Vagina (tissue), 2 donors: ENCODE measurements at regions of chr1 and their contacts with region 1.

Region 1: GRCh38 chr1:68585351-68585750 is 88.5 kb upstream of the DEPDC1 start:
- DNase-seq: no peak
- H3K4me3 ChIP-seq: no peak overlapping the region
- H3K27ac ChIP-seq: no peak overlapping the region
- H3K4me1 ChIP-seq: no peaks in the 10 kb centered on the region
- H3K27me3 ChIP-seq: no peaks in the 10 kb centered on the region
- CTCF ChIP-seq: no peak
- POLR2A ChIP-seq: no peak

Region 2: GRCh38 chr1:68442822-68443556 is 142.4 kb before region 1 on chr1:
- intact Hi-C with region 1: no loop called
- DNase-seq: no peak
- H3K4me3 ChIP-seq: no peak overlapping the region
- H3K27ac ChIP-seq: no peak overlapping the region
- H3K4me1 ChIP-seq: no peaks in the 10 kb centered on the region
- H3K27me3 ChIP-seq: no peaks in the 10 kb centered on the region
- CTCF ChIP-seq: peak in 1 of 3 experiments; percentile 38
- POLR2A ChIP-seq: no peak

Region 3: GRCh38 chr1:68470388-68470970 is 114.9 kb before region 1 on chr1:
- intact Hi-C with region 1: no loop called
- DNase-seq: no peak
- H3K4me3 ChIP-seq: no peak overlapping the region
- H3K27ac ChIP-seq: no peak overlapping the region
- H3K4me1 ChIP-seq: no peaks in the 10 kb centered on the region
- H3K27me3 ChIP-seq: no peaks in the 10 kb centered on the region
- CTCF ChIP-seq: no peak
- POLR2A ChIP-seq: no peak

Region 4: GRCh38 chr1:69967245-69967766 is 1382.0 kb after region 1 on chr1:
- intact Hi-C with region 1: loop called (anchors 5 kb)
- DNase-seq: no peak
- H3K4me3 ChIP-seq: no peak overlapping the region
- H3K27ac ChIP-seq: no peak overlapping the region
- H3K4me1 ChIP-seq: no peaks in the 10 kb centered on the region
- H3K27me3 ChIP-seq: no peaks in the 10 kb centered on the region
- CTCF ChIP-seq: no peak
- POLR2A ChIP-seq: no peak